ENCODE measurements at regions of chr5 and their contacts with region 1.

Region 1: DNA sequence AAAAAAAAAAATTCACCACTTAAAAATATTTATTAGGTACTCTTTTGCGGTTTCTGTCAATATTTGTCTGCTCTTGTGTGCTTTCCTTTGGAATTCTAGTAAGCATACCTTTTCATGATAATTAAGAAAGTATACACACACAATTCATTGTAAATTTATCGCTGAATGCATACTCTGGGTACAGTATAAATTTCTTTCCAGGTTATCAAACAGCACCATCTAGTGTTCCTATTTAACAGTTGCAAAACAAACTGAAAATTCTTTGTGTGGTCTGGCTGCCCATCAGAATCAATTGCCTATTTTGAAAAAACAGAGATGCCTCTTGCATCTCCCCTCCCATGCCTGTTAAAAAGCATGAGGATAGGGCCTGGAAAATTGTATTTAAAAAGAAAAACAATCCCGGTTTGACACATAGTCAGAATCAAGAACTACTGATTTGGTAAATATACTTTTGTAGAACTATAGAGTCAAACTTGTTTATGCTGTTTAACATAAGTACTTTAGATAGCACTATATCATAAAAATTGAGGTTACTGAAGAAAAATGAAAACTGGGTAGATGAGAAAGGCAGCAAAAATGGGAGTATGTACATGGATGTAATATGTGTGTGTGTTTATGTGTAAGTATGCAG is 16.2 kb downstream of the PGGT1B start:
- DNase-seq: no peak
- H3K4me3 ChIP-seq: no peak overlapping the region
- H3K27ac ChIP-seq: no peak overlapping the region
- H3K4me1 ChIP-seq: peaks cover 10 to 31% (median 23%) of the 10 kb centered on the region in 4 donors
- H3K27me3 ChIP-seq: no peaks in the 10 kb centered on the region
- CTCF ChIP-seq: peak; percentile 63 to 74 (median 64)
- EP300 ChIP-seq: no peak
- POLR2A ChIP-seq: no peak

Region 2: DNA sequence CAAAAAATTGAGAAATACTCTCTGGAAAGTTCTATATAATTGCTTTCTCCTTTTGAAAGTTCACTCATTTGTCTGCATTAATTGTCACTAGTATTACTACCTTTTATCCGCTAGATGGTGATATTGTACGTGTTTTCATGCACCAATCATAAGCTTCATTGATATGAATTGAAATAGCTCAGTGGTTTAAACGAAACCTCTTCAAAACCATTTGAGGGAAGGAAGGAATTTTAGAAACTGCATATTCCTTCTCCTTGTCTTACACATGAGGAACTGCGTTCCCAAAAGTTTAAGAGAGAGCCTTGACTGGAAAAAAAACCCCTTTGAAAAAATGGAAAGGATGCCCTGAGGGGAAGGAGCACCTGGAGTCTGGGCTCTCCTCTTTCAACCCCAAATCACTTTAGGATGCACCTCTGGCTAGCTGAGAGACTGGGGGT is 1634.4 kb before region 1 on chr5:
- intact Hi-C with region 1: loop called (anchors 10 kb)
- DNase-seq: no peak
- H3K4me3 ChIP-seq: no peak overlapping the region
- H3K27ac ChIP-seq: no peak overlapping the region
- H3K4me1 ChIP-seq: peaks cover 0 to 4% (median 0%) of the 10 kb centered on the region in 4 donors
- H3K27me3 ChIP-seq: peaks cover 0 to 13% (median 0%) of the 10 kb centered on the region in 4 donors
- CTCF ChIP-seq: peak; percentile 61 to 71 (median 69)
- EP300 ChIP-seq: no peak
- POLR2A ChIP-seq: no peak

Region 3: GRCh38 chr5:115098041-115098702 is 148.3 kb before region 1 on chr5:
- intact Hi-C with region 1: loop called (anchors 2 kb)
- DNase-seq: no peak
- H3K4me3 ChIP-seq: no peak overlapping the region
- H3K27ac ChIP-seq: no peak overlapping the region
- H3K4me1 ChIP-seq: peaks cover 0 to 6% (median 3%) of the 10 kb centered on the region in 4 donors
- H3K27me3 ChIP-seq: no peaks in the 10 kb centered on the region
- CTCF ChIP-seq: peak; percentile 60 to 68 (median 66)
- EP300 ChIP-seq: no peak
- POLR2A ChIP-seq: no peak

Region 4: GRCh38 chr5:115389799-115390382 is 143.4 kb after region 1 on chr5:
- intact Hi-C with region 1: no loop called
- DNase-seq: peak; percentile 88
- H3K4me3 ChIP-seq: no peak overlapping the region
- H3K27ac ChIP-seq: peak overlapping the region in 3 of 4 donors; percentile 21 to 54 (median 40)
- H3K4me1 ChIP-seq: peaks cover 13 to 30% (median 24%) of the 10 kb centered on the region in 4 donors
- H3K27me3 ChIP-seq: no peaks in the 10 kb centered on the region
- CTCF ChIP-seq: no peak
- EP300 ChIP-seq: no peak
- POLR2A ChIP-seq: no peak

Measured in esophagus muscularis mucosa (tissue), 4 donors.